A549 (cell line): ENCODE measurements at regions of chr2 and their contacts with region 1.

Region 1: GRCh38 chr2:26345545-26346453 is at the start of gene SELENOI:
- DNase-seq: peak; percentile 91 to 100
- ATAC-seq: peak; percentile 93 to 97
- H3K4me3 ChIP-seq: peak within 1 kb of the TSS; percentile 76
- H3K27ac ChIP-seq: peak within 1 kb of the TSS; percentile 88 to 95
- H3K4me1 ChIP-seq: peaks cover 39% of the 10 kb centered on the region
- CTCF ChIP-seq: no peak
- EP300 ChIP-seq: no peak
- POLR2A ChIP-seq: peak; percentile 98
- RAD21 ChIP-seq: peak in 1 of 2 experiments; percentile 25; a peak in 1 of 5 replicates
- polyA plus RNA-seq, gene SELENOI: 30.5 and 38.7 TPM in 2 replicates

Region 2: GRCh38 chr2:26244309-26245121 is 101.3 kb before region 1 on chr2 and contains the starts of genes HADHA and HADHB:
- CTCF ChIA-PET with region 1: no interaction called
- POLR2A ChIA-PET with region 1: interaction called, 18 read pairs
- DNase-seq: peak; percentile 81 to 97
- ATAC-seq: peak; percentile 92 to 97
- H3K4me3 ChIP-seq: peak within 1 kb of the TSS; percentile 74
- H3K27ac ChIP-seq: peak within 1 kb of the TSS; percentile 77 to 94
- H3K4me1 ChIP-seq: peaks cover 34% of the 10 kb centered on the region
- CTCF ChIP-seq: peak; percentile 21; the same call in 1 of the 3 replicates
- EP300 ChIP-seq: no peak
- POLR2A ChIP-seq: peak; percentile 83
- RAD21 ChIP-seq: peak; percentile 3 to 17; a peak in 1 of 5 replicates
- polyA plus RNA-seq, gene HADHA: 161 and 174 TPM in 2 replicates
- polyA plus RNA-seq, gene HADHB: 161 and 173 TPM in 2 replicates